ENCODE measurements at regions of chr17 and their contacts with region 1.

Region 1: GRCh38 chr17:20009302-20010098 is at the start of gene SPECC1:
- DNase-seq: no peak
- H3K4me3 ChIP-seq: peak within 1 kb of the TSS; percentile 63
- H3K27me3 ChIP-seq: peaks cover 11% of the 10 kb centered on the region
- CTCF ChIP-seq: no peak
- polyA plus RNA-seq, gene SPECC1: 13.0 and 16.9 TPM in 2 replicates

Region 2: GRCh38 chr17:19664136-19664820 is 345.2 kb before region 1 on chr17:
- CTCF ChIA-PET with region 1: no interaction called
- POLR2A ChIA-PET with region 1: no interaction called
- DNase-seq: no peak
- H3K4me3 ChIP-seq: no peak overlapping the region
- H3K27me3 ChIP-seq: no peaks in the 10 kb centered on the region
- CTCF ChIP-seq: no peak

Region 3: DNA sequence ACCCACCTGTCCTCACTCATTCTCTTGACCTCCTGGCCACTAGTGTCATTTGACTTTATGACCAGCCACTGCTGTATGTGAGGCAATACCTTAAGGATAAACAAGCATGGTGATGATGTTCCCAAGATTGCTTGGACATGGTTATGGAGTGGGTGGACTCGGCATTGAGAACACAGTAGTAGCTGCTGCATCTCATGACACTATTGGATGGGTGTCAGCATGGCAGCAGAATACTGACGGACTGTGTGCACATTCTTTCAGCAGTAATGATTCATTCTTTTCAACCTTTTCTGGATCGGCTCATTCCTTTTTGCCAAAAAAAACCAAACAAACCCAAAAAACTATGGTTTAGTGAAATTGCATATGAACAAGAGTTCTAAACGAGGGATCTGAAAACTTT is 13.2 kb after region 1 on chr17:
- CTCF ChIA-PET with region 1: interaction called, 16 read pairs
- POLR2A ChIA-PET with region 1: no interaction called
- DNase-seq: no peak
- H3K4me3 ChIP-seq: no peak overlapping the region
- H3K27me3 ChIP-seq: peaks cover 3% of the 10 kb centered on the region; the same call in 1 of the 2 replicates
- CTCF ChIP-seq: no peak